ENCODE measurements at regions of chr18 and their contacts with region 1.

Region 1: GRCh38 chr18:35983818-35984217 is 11.3 kb downstream of the RMP24 start:
- DNase-seq: no peak
- H3K4me3 Mint-ChIP-seq: no peak overlapping the region
- H3K27ac Mint-ChIP-seq: no peak overlapping the region
- H3K4me1 Mint-ChIP-seq: no peaks in the 10 kb centered on the region
- H3K27me3 Mint-ChIP-seq: no peaks in the 10 kb centered on the region
- CTCF ChIP-seq: no peak

Region 2: GRCh38 chr18:35730691-35731370 is 253.0 kb before region 1 on chr18:
- CTCF ChIA-PET with region 1: no interaction called
- POLR2A ChIA-PET with region 1: no interaction called
- intact Hi-C with region 1: no loop called
- DNase-seq: no peak
- H3K4me3 Mint-ChIP-seq: no peak overlapping the region
- H3K27ac Mint-ChIP-seq: peak overlapping the region; percentile 24
- H3K4me1 Mint-ChIP-seq: no peaks in the 10 kb centered on the region
- H3K27me3 Mint-ChIP-seq: peaks cover 21% of the 10 kb centered on the region
- CTCF ChIP-seq: no peak

Region 3: GRCh38 chr18:35972197-35973052 is 11.4 kb before region 1 on chr18 and contains the start of gene RMP24:
- CTCF ChIA-PET with region 1: interaction called, 7 read pairs
- POLR2A ChIA-PET with region 1: interaction called, 13 read pairs
- intact Hi-C with region 1: no loop called
- DNase-seq: peak; percentile 96
- H3K4me3 Mint-ChIP-seq: peak within 1 kb of the TSS; percentile 93
- H3K27ac Mint-ChIP-seq: peak within 1 kb of the TSS; percentile 97
- H3K4me1 Mint-ChIP-seq: peaks cover 32% of the 10 kb centered on the region
- H3K27me3 Mint-ChIP-seq: no peaks in the 10 kb centered on the region
- CTCF ChIP-seq: no peak

Measured in MCF 10A (cell line).